ENCODE measurements at regions of chr18 and their contacts with region 1.

Region 1: DNA sequence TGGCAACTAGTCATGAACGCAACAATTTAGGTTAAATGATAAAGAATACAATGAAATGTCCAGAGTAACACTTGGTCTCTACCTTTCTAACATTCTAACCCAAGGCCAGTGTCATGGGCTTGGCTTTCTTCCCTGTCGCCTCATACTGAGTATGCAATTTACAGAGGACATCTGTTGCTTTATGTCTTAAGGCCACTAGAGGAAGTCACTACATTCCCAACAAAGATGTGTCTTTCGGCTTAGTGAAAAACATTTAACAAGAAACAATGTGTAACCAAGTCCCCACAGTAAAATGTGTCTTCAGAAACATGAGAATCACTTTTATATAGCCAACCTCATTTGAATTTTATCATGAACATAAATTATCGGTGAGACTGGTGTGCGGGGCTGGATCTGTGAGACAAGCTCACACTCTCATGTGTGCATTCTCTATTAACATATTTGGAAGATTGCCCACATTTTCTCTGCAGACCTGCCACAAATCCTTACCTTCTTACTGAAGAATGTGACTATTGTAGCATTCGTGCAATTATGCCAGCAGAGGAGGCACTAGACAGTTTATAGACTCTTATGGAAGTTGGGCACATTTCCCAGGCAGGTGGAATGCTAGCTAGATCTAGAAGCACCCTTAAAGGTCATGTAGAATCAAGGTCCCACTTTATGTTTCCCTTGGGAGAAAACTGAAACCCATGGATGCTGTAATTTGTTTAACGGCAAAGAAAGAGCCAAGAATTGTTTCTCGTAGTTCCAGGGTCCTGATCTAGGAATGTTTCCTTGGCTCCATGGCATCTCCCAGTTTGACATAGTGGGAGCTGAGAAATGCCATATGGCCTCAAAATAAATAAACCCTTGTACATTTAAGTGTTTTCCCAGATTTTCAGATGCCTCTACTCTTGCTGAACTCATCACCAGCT is 101.8 kb downstream of the CD226 start:
- DNase-seq: peak; percentile 62
- ATAC-seq: peak; percentile 31
- H3K4me3 ChIP-seq: no peak overlapping the region
- H3K27ac ChIP-seq: peak overlapping the region; percentile 35; the same call in 1 of the 2 replicates
- H3K4me1 ChIP-seq: peaks cover 6% of the 10 kb centered on the region
- H3K27me3 ChIP-seq: no peaks in the 10 kb centered on the region
- CTCF ChIP-seq: no peak
- POLR2A ChIP-seq: no peak
- RAD21 ChIP-seq: no peak

Region 2: DNA sequence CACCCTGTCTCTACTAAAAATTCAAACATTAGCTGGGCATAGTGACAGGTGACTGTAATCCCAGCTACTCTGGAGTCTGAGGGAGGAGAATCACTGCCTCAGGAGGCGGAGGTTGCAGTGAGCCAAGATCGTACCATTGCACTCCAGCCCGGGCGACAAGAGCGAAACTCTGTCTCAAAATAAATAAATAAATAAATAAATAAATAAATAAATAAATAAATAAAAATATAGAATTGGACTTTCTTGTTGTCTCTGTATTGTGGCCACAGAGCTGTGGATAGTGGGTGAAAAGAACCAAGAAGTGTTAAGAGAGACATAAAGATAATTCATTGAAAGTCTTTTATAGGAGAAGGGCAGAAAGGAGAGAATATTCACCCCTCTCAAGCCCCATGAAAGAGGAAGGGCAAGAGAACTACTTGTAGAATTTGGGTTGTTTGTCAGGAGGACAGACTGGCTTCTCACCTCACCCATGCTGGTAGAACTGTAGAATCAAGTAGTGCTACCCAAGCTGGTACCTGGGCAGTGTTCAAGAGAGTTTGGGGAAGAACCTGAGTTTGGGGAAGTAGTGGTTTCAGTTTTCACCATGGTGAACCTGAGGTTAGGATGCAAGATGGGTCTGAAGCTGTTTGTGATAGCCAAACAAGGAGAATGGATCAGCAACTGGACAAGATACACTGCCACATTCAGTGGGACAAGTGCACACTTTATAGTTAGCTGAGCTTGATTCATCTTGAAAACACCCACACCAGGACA is 154.7 kb before region 1 on chr18:
- CTCF ChIA-PET with region 1: no interaction called
- POLR2A ChIA-PET with region 1: no interaction called
- dilution Hi-C with region 1: no loop called
- in situ Hi-C with region 1: no loop called
- intact Hi-C with region 1: loop called (anchors 10 kb)
- DNase-seq: no peak
- ATAC-seq: no peak
- H3K4me3 ChIP-seq: no peak overlapping the region
- H3K27ac ChIP-seq: no peak overlapping the region
- H3K4me1 ChIP-seq: peaks cover 4% of the 10 kb centered on the region; the same call in 1 of the 2 replicates
- H3K27me3 ChIP-seq: no peaks in the 10 kb centered on the region
- CTCF ChIP-seq: no peak
- POLR2A ChIP-seq: no peak
- RAD21 ChIP-seq: no peak

Region 3: GRCh38 chr18:70044632-70045031 is 198.8 kb after region 1 on chr18:
- CTCF ChIA-PET with region 1: no interaction called
- POLR2A ChIA-PET with region 1: no interaction called
- dilution Hi-C with region 1: no loop called
- in situ Hi-C with region 1: no loop called
- intact Hi-C with region 1: loop called (anchors 10 kb)
- DNase-seq: peak; percentile 98
- ATAC-seq: peak; percentile 85
- H3K4me3 ChIP-seq: no peak overlapping the region
- H3K27ac ChIP-seq: peak overlapping the region; percentile 18; the same call in 1 of the 2 replicates
- H3K4me1 ChIP-seq: peaks cover 9% of the 10 kb centered on the region
- H3K27me3 ChIP-seq: no peaks in the 10 kb centered on the region
- CTCF ChIP-seq: no peak
- POLR2A ChIP-seq: no peak
- RAD21 ChIP-seq: no peak